ENCODE measurements at regions of chr11 and their contacts with region 1.

Region 1: GRCh38 chr11:115170133-115170815 is 333.9 kb downstream of the CADM1 start:
- DNase-seq: peak in 1 of 2 experiments; percentile 68
- H3K4me3 ChIP-seq: no peak overlapping the region
- H3K27ac ChIP-seq: no peak overlapping the region
- H3K4me1 ChIP-seq: peaks cover 3 to 12% (median 5%) of the 10 kb centered on the region in 4 experiments; a peak in 4 of 7 replicates
- H3K27me3 ChIP-seq: no peaks in the 10 kb centered on the region
- CTCF ChIP-seq: peak in 2 of 3 experiments; percentile 41 to 65; a peak in 3 of 4 replicates
- EP300 ChIP-seq: no peak
- POLR2A ChIP-seq: no peak
- RAD21 ChIP-seq: peak; percentile 28; a peak in 3 of 4 replicates

Region 2: DNA sequence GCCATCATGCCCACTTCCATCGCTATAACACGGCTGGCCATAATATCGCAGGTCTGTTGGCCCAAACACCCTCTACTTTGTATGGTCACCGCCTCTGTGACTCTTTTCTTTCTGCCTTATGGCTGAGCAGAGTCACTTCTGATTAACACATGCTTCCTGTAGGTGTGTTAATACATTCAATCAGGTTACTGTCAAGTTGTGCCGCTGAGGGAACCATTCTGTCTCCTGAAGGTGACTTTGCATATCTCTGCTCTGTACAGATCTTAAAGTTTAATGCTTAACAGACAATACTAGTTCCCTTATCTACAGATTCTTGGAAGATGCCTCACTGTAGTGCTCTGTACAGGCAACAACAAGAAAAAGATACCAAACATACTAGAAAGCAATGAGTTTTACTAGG is 59.2 kb before region 1 on chr11:
- CTCF ChIA-PET with region 1: no interaction called
- POLR2A ChIA-PET with region 1: no interaction called
- DNase-seq: no peak
- H3K4me3 ChIP-seq: no peak overlapping the region
- H3K27ac ChIP-seq: no peak overlapping the region
- H3K4me1 ChIP-seq: peaks cover 0 to 5% (median 0%) of the 10 kb centered on the region in 4 experiments; a peak in 3 of 7 replicates
- H3K27me3 ChIP-seq: no peaks in the 10 kb centered on the region
- CTCF ChIP-seq: no peak
- EP300 ChIP-seq: no peak
- POLR2A ChIP-seq: no peak
- RAD21 ChIP-seq: no peak

Region 3: GRCh38 chr11:115159207-115159606 is 11.1 kb before region 1 on chr11:
- CTCF ChIA-PET with region 1: interaction called, 17 read pairs
- POLR2A ChIA-PET with region 1: no interaction called
- DNase-seq: no peak
- H3K4me3 ChIP-seq: no peak overlapping the region
- H3K27ac ChIP-seq: no peak overlapping the region
- H3K4me1 ChIP-seq: peaks cover 6 to 12% (median 9%) of the 10 kb centered on the region in 4 experiments; a peak in 6 of 7 replicates
- H3K27me3 ChIP-seq: no peaks in the 10 kb centered on the region
- CTCF ChIP-seq: no peak
- EP300 ChIP-seq: no peak
- POLR2A ChIP-seq: no peak
- RAD21 ChIP-seq: no peak

Region 4: DNA sequence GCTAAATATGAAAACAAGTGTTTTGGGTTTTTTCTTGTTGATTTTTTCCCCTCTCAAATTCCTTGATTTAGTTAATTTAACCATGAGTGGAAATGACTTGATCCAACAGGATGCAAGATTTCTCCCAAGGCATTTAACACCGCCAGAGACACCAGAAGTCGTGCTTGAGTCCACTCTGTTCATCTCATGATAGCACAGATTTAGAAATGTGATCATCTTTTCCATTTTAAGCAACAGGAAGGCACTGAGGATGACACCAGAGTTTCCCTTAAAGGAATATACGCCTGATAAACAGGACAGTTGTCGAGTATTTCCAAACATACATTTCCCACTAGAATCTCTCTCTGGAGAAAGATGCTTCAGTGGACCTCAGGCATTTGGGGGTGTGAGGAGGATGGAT is 15.2 kb after region 1 on chr11:
- CTCF ChIA-PET with region 1: interaction called, 17 read pairs
- POLR2A ChIA-PET with region 1: no interaction called
- DNase-seq: no peak
- H3K4me3 ChIP-seq: no peak overlapping the region
- H3K27ac ChIP-seq: no peak overlapping the region
- H3K4me1 ChIP-seq: no peaks in the 10 kb centered on the region
- H3K27me3 ChIP-seq: no peaks in the 10 kb centered on the region; a peak in 1 of 7 replicates
- CTCF ChIP-seq: no peak
- EP300 ChIP-seq: no peak
- POLR2A ChIP-seq: no peak
- RAD21 ChIP-seq: no peak

Region 5: DNA sequence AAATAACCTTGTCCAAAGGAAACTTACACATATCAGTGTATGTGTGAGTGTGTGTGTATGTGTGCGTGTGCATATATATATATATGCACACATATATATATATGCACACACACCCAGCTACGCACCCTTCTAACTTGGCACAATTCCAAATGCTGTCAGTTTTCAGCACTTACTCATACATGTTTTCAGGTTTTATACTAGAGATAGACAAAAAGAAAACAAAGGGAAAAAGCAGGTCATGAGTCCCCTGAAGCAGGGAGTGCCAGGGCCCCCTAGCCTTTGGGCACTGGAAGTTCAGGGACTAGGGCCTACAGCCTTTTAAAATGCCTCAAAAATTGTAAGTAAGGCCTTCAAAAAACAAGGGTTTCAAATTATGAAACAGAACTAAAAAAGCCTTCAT is 68.5 kb after region 1 on chr11:
- CTCF ChIA-PET with region 1: no interaction called
- POLR2A ChIA-PET with region 1: no interaction called
- DNase-seq: no peak
- H3K4me3 ChIP-seq: no peak overlapping the region
- H3K27ac ChIP-seq: no peak overlapping the region
- H3K4me1 ChIP-seq: no peaks in the 10 kb centered on the region
- H3K27me3 ChIP-seq: no peaks in the 10 kb centered on the region
- CTCF ChIP-seq: peak; percentile 36 to 53 (median 41); a peak in 3 of 4 replicates
- EP300 ChIP-seq: no peak
- POLR2A ChIP-seq: no peak
- RAD21 ChIP-seq: peak; percentile 59 to 70